ENCODE measurements at regions of chr6 and their contacts with region 1.

Region 1: DNA sequence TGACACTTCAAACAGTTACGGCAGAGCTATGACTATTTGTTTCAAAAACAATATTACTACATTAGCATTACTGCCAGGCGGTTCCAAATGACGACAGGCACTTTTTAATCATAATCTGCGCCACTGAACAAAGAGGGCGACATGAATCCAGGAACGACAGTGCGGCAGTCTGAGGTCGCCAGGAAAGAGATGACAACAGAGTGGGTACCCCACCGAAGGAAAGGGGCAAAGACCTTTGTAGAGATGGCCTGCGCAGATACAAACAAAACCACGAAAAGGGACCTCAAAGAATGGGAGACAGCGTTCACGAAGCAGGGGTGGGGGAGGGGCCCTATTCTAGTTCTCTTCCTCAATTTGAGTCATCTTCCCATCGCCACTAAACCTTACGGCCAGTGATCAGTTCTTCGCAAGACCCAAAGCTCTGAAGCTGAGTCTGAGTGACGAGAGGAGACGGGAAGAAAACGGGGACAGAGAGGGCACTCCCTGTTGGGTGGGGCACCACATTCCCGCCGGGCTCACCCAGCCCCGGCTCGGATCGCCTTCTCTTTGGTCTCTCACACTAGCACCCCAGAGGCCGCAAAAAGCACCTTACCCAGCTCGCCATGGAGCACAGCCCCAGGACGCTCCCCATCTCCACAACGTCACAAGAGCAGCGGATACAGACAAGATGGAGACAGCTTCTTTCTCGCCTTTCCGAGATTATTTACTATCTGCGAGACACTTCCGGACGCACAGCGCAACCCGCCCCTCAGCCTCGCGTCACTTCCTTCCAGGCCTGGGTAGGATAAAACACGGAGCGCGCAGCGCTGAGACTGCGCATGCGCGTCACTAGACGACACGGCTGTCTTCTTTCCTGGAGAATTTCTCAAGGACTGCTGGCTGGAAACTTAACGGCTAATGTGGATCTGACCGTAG is at the start of gene SERINC1:
- DNase-seq: peak; percentile 83
- ATAC-seq: peak; percentile 95
- H3K4me3 Mint-ChIP-seq: peak within 1 kb of the TSS; percentile 99
- H3K27ac Mint-ChIP-seq: peak within 1 kb of the TSS; percentile 99
- H3K4me1 Mint-ChIP-seq: peaks cover 48% of the 10 kb centered on the region
- H3K27me3 Mint-ChIP-seq: no peaks in the 10 kb centered on the region
- CTCF ChIP-seq: no peak
- total RNA-seq, gene SERINC1: 51.3 and 52.0 TPM in 2 replicates

Region 2: DNA sequence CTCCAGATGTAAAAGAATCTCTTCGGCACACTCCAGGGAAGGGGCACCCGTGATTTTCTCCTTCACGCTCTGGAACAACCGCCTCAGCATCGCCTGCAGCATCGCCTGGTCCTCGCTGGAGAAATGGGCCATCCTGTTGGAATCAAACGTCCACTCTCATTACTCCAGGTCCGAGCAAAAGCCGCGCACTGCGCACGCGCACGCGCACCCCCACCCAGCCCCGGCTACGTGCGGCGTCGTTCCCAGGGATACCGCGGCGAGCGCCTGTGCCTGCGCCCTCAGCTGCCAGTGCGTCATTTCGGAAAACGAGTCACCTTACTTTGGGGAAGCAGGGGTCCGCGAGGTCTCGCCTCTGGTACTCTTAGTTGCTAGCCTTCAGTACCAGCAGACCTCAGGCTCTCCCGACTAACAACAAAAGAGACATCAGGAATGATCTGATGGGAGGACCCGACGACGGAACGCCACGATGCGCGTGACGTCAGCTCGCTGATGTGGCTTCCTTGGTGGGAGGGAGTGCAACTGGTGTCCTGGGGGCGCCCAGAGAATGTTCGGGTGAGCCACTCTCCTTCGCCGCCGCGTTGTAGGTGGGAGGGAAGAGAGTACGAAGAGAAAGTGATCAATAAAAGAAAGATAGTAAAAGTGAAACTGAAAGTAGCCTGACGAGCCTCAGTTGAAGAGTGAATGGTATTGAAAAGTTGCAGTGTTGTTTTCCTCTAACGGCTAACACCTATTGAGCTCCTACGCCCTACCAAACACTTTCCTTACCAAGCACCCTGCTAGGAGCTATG is 1136.9 kb before region 1 on chr6 and contains the start of gene TBC1D32:
- CTCF ChIA-PET with region 1: no interaction called
- POLR2A ChIA-PET with region 1: interaction called, 5 read pairs
- intact Hi-C with region 1: loop called (anchors 1 kb)
- DNase-seq: peak; percentile 88
- ATAC-seq: peak; percentile 89
- H3K4me3 Mint-ChIP-seq: peak within 1 kb of the TSS; percentile 94
- H3K27ac Mint-ChIP-seq: peak within 1 kb of the TSS; percentile 96
- H3K4me1 Mint-ChIP-seq: peaks cover 31% of the 10 kb centered on the region
- H3K27me3 Mint-ChIP-seq: no peaks in the 10 kb centered on the region
- CTCF ChIP-seq: no peak
- total RNA-seq, gene TBC1D32: 11.3 and 17.8 TPM in 2 replicates

Region 3: DNA sequence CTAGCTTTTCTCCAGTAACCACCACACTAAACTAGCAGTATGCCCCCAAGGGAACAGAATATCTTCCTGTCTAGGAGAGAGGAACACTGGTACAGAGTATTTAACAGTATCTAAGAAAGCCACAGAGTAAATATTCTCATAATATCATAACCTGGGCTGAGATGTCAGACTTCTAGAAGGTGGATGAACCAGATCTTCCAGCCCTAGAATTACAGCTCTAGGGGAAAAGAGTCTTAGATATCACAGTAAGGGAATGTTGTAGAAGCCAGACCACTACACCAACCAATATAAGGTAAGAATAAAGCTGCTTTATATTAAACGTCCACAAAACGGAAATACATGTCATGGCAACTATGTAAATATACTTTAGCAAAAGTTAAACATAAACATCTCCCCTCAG is 12.2 kb before region 1 on chr6:
- CTCF ChIA-PET with region 1: interaction called, 4 read pairs
- POLR2A ChIA-PET with region 1: interaction called, 3 read pairs
- intact Hi-C with region 1: loop called (anchors 1 kb)
- DNase-seq: no peak
- ATAC-seq: no peak
- H3K4me3 Mint-ChIP-seq: no peak overlapping the region
- H3K27ac Mint-ChIP-seq: no peak overlapping the region
- H3K4me1 Mint-ChIP-seq: peaks cover 65% of the 10 kb centered on the region
- H3K27me3 Mint-ChIP-seq: no peaks in the 10 kb centered on the region
- CTCF ChIP-seq: no peak

Region 4: DNA sequence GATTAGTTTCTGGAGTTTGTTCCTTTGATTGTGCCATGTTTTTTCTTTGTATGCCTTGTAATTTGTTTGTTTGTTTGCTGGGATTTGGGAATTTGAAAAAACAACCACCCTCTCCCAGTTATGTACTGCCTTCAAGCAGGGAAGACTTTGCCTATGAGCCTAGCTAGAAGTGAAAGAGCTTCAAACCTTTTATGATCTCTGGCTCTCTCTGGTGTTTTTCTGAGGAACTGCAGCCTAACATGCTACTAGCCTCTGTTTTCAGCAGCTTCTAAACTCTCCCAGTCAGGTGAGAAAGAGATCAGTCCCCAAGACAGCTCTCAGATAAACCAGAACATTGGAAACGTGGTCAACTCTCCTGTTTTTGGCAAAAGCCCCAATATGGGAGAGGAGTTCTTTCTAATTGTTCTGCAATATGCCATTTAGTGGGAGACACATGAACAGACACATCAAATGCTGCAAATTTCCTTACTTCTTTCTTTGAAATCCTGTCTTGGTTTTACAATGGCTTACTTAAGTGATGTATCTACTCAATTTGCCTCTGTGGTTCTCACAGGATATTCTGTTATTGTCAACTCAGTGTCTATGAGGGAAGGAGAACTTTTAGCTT is 59.2 kb after region 1 on chr6:
- CTCF ChIA-PET with region 1: interaction called, 37 read pairs
- POLR2A ChIA-PET with region 1: interaction called, 5 read pairs
- intact Hi-C with region 1: loop called (anchors 1 kb)
- DNase-seq: no peak
- ATAC-seq: peak; percentile 94
- H3K4me3 Mint-ChIP-seq: no peak overlapping the region
- H3K27ac Mint-ChIP-seq: no peak overlapping the region
- H3K4me1 Mint-ChIP-seq: no peaks in the 10 kb centered on the region
- H3K27me3 Mint-ChIP-seq: peaks cover 16% of the 10 kb centered on the region
- CTCF ChIP-seq: peak; percentile 60

Region 5: DNA sequence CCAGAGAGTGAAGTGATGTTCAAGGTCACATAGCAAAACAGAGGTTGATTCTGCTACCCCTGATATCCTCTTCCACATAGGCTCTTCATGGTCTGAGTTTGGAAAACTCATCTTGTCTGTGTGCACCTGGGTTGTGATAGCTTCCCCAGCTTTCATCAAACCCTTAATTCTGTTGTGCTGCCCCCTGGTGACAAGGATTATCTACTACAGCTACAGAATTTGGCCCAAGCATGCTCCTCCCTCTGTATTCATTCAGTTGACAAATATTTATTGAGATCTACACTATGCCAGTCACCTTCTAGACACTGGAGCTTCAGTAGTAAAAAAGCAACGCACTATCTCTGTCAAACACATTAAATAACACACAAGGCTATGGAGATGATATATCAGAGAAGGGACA is 368.1 kb after region 1 on chr6:
- CTCF ChIA-PET with region 1: no interaction called
- POLR2A ChIA-PET with region 1: no interaction called
- intact Hi-C with region 1: loop called (anchors 1 kb)
- DNase-seq: no peak
- ATAC-seq: peak; percentile 58
- H3K4me3 Mint-ChIP-seq: no peak overlapping the region
- H3K27ac Mint-ChIP-seq: no peak overlapping the region
- H3K4me1 Mint-ChIP-seq: no peaks in the 10 kb centered on the region
- H3K27me3 Mint-ChIP-seq: peaks cover 7% of the 10 kb centered on the region
- CTCF ChIP-seq: no peak

Measured in activated B cell treated with CpG ODN at 0.5 μM for 24 hours (primary cell).